CD4-positive, alpha-beta T cell (primary cell): ENCODE measurements at regions of chr18 and their contacts with region 1.

Region 1: DNA sequence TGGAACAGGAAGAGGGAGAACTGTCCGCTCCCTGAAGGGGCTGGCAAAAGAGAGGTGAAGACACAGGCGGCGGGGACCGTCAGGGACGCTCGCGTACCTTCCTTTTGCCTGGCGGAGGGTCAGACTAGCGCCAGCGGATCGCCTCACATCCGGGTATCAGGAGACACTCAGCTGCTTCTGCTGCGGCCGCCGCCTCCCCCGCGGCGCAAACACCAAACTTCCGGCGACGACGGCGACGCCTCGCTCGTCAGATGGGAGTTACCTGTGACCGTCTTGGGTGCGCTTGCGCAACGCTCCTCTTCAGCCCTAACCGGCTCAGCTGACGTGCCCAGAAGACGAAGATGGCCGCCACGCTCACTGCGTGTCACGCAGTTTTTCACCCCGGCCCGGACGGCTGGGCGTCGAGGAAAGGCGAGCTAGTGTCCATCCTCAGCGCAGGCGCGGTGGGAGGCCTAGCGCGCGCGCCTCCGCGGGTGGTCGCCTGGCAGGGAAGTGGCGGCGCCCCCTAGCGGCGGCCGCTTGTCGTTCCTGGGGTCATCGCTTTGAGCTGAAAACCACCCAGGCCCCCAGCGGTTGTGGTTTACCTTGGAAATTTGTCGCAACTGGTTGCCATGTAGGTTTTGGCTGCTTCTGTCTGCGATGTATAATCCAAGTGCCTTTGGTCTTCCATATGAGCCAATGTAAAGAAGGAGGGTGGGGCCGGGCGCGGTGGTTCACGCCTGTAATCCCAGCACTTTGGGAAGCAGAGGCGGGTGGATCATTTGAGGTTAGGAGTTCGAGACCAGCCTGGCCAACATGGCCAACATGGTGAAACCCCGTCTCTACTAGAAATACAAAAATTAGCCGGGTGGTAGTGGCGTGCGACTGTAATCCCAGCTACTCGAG is at the start of gene ESCO1:
- DNase-seq: peak; percentile 86 to 99 (median 91)
- ATAC-seq: peak; percentile 86
- H3K4me3 ChIP-seq: peak within 1 kb of the TSS; percentile 96
- H3K4me3 Mint-ChIP-seq: peak within 1 kb of the TSS; percentile 100
- H3K27ac ChIP-seq: peak within 1 kb of the TSS; percentile 97 to 98
- H3K27ac Mint-ChIP-seq: peak within 1 kb of the TSS; percentile 99
- H3K4me1 ChIP-seq: peaks cover 28% of the 10 kb centered on the region
- H3K4me1 Mint-ChIP-seq: peaks cover 57% of the 10 kb centered on the region
- H3K27me3 ChIP-seq: no peaks in the 10 kb centered on the region
- H3K27me3 Mint-ChIP-seq: no peaks in the 10 kb centered on the region
- CTCF ChIP-seq: peak; percentile 98
- total RNA-seq, gene ESCO1: 31.7 to 32.8 TPM

Region 2: DNA sequence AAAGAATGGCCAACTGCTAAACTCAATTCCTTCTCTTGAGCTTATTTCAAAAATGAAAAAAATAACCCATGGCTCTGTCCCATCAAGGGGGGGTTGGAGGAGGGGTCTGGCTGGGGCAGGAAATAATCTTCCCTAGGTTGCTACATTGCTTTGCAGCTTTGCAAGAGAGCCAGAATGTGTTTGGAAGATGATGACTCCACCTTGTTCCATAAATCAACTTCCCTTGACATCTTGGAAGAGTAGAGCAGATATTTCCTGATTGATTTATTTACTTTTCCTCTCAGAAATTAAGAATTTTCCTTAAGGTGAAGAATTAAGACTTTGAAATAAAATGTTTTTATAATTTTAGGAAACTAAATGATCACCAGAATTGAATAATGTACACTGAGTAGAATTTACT is 41.6 kb before region 1 on chr18:
- CTCF ChIA-PET with region 1: no interaction called
- POLR2A ChIA-PET with region 1: interaction called, 10 read pairs
- intact Hi-C with region 1: no loop called
- DNase-seq: no peak
- ATAC-seq: no peak
- H3K4me3 ChIP-seq: no peak overlapping the region
- H3K4me3 Mint-ChIP-seq: no peak overlapping the region
- H3K27ac ChIP-seq: no peak overlapping the region
- H3K27ac Mint-ChIP-seq: no peak overlapping the region
- H3K4me1 ChIP-seq: no peaks in the 10 kb centered on the region
- H3K4me1 Mint-ChIP-seq: no peaks in the 10 kb centered on the region
- H3K27me3 ChIP-seq: no peaks in the 10 kb centered on the region
- H3K27me3 Mint-ChIP-seq: no peaks in the 10 kb centered on the region
- CTCF ChIP-seq: no peak

Region 3: GRCh38 chr18:21612125-21612991 is 11.6 kb after region 1 on chr18 and contains the start of gene SNRPD1:
- CTCF ChIA-PET with region 1: interaction called, 104 read pairs
- POLR2A ChIA-PET with region 1: interaction called, 184 read pairs
- intact Hi-C with region 1: loop called (anchors 1 kb)
- DNase-seq: peak; percentile 73 to 94 (median 86)
- ATAC-seq: peak; percentile 99
- H3K4me3 ChIP-seq: peak within 1 kb of the TSS; percentile 85
- H3K4me3 Mint-ChIP-seq: peak within 1 kb of the TSS; percentile 100
- H3K27ac ChIP-seq: peak within 1 kb of the TSS; percentile 86 to 90
- H3K27ac Mint-ChIP-seq: peak within 1 kb of the TSS; percentile 94
- H3K4me1 ChIP-seq: peaks cover 26% of the 10 kb centered on the region
- H3K4me1 Mint-ChIP-seq: peaks cover 44% of the 10 kb centered on the region
- H3K27me3 ChIP-seq: no peaks in the 10 kb centered on the region
- H3K27me3 Mint-ChIP-seq: no peaks in the 10 kb centered on the region
- CTCF ChIP-seq: peak; percentile 86
- total RNA-seq, gene SNRPD1: 35.7 to 38.9 TPM

Region 4: GRCh38 chr18:21682371-21683051 is 81.7 kb after region 1 on chr18:
- CTCF ChIA-PET with region 1: interaction called, 4 read pairs
- POLR2A ChIA-PET with region 1: interaction called, 40 read pairs
- intact Hi-C with region 1: no loop called
- DNase-seq: peak in 8 of 14 experiments; percentile 2 to 73 (median 28)
- ATAC-seq: peak; percentile 87
- H3K4me3 ChIP-seq: peak overlapping the region; percentile 57
- H3K4me3 Mint-ChIP-seq: no peak overlapping the region
- H3K27ac ChIP-seq: peak overlapping the region; percentile 47 to 87
- H3K27ac Mint-ChIP-seq: no peak overlapping the region
- H3K4me1 ChIP-seq: peaks cover 14% of the 10 kb centered on the region
- H3K4me1 Mint-ChIP-seq: peaks cover 28% of the 10 kb centered on the region
- H3K27me3 ChIP-seq: no peaks in the 10 kb centered on the region
- H3K27me3 Mint-ChIP-seq: no peaks in the 10 kb centered on the region
- CTCF ChIP-seq: no peak

Region 5: GRCh38 chr18:21704603-21705364 is 104.0 kb after region 1 on chr18 and contains the start of gene ABHD3:
- CTCF ChIA-PET with region 1: interaction called, 17 read pairs
- POLR2A ChIA-PET with region 1: interaction called, 64 read pairs
- intact Hi-C with region 1: no loop called
- DNase-seq: peak; percentile 83 to 97 (median 90)
- ATAC-seq: peak; percentile 93
- H3K4me3 ChIP-seq: peak within 1 kb of the TSS; percentile 93
- H3K4me3 Mint-ChIP-seq: peak within 1 kb of the TSS; percentile 97
- H3K27ac ChIP-seq: peak within 1 kb of the TSS; percentile 67 to 83
- H3K27ac Mint-ChIP-seq: peak within 1 kb of the TSS; percentile 96
- H3K4me1 ChIP-seq: peaks cover 10% of the 10 kb centered on the region
- H3K4me1 Mint-ChIP-seq: peaks cover 34% of the 10 kb centered on the region
- H3K27me3 ChIP-seq: no peaks in the 10 kb centered on the region
- H3K27me3 Mint-ChIP-seq: no peaks in the 10 kb centered on the region
- CTCF ChIP-seq: peak; percentile 48
- total RNA-seq, gene ABHD3: 24.1 to 25.4 TPM

Region 6: GRCh38 chr18:21740724-21741510 is 140.1 kb after region 1 on chr18 and contains the start of gene MIB1:
- CTCF ChIA-PET with region 1: interaction called, 11 read pairs
- POLR2A ChIA-PET with region 1: interaction called, 86 read pairs
- intact Hi-C with region 1: loop called in 1 of 2 experiments (anchors 5 kb)
- DNase-seq: peak in 11 of 14 experiments; percentile 25 to 99 (median 76)
- ATAC-seq: peak; percentile 57
- H3K4me3 ChIP-seq: peak within 1 kb of the TSS; percentile 94
- H3K4me3 Mint-ChIP-seq: peak within 1 kb of the TSS; percentile 98
- H3K27ac ChIP-seq: peak within 1 kb of the TSS; percentile 87 to 95
- H3K27ac Mint-ChIP-seq: peak within 1 kb of the TSS; percentile 93
- H3K4me1 ChIP-seq: peaks cover 34% of the 10 kb centered on the region
- H3K4me1 Mint-ChIP-seq: peaks cover 44% of the 10 kb centered on the region
- H3K27me3 ChIP-seq: no peaks in the 10 kb centered on the region
- H3K27me3 Mint-ChIP-seq: no peaks in the 10 kb centered on the region
- CTCF ChIP-seq: no peak
- total RNA-seq, gene MIB1: 13.6 to 15.3 TPM

Region 7: GRCh38 chr18:23503038-23503962 is 1902.5 kb after region 1 on chr18 and contains the start of gene RMC1:
- CTCF ChIA-PET with region 1: no interaction called
- POLR2A ChIA-PET with region 1: no interaction called
- intact Hi-C with region 1: loop called in 1 of 2 experiments (anchors 5 kb)
- DNase-seq: peak; percentile 92 to 99 (median 97)
- ATAC-seq: peak; percentile 89
- H3K4me3 ChIP-seq: peak within 1 kb of the TSS; percentile 76
- H3K4me3 Mint-ChIP-seq: peak within 1 kb of the TSS; percentile 91
- H3K27ac ChIP-seq: peak within 1 kb of the TSS; percentile 86 to 89
- H3K27ac Mint-ChIP-seq: peak within 1 kb of the TSS; percentile 91
- H3K4me1 ChIP-seq: peaks cover 45% of the 10 kb centered on the region
- H3K4me1 Mint-ChIP-seq: peaks cover 51% of the 10 kb centered on the region
- H3K27me3 ChIP-seq: no peaks in the 10 kb centered on the region
- H3K27me3 Mint-ChIP-seq: no peaks in the 10 kb centered on the region
- CTCF ChIP-seq: no peak
- total RNA-seq, gene RMC1: 46.9 to 48.3 TPM